Panc1 (cell line): ENCODE measurements at regions of chr9 and their contacts with region 1.

Region 1: DNA sequence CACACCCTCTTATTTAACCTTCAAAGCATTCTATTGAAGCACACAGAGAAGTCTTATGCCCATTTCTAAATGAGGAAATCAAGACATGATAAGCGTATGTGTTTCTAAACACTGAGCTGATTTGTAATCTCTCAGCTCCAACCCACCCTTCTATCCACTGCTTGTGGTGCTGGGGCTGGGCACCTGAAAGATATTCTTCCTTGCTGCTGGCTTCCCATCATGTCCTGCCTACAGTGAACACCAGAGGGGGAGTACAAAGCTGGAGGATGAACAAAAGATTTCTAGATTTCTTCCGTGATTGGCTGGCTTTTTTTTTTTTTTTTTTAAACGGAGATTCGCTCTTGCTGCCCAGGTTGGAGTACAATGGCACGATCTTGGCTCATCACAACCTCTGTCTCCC is 14.4 kb downstream of the ACTL7A start:
- DNase-seq: no peak
- ATAC-seq: no peak
- H3K4me3 ChIP-seq: no peak overlapping the region
- H3K27ac ChIP-seq: no peak overlapping the region
- H3K4me1 ChIP-seq: no peaks in the 10 kb centered on the region
- H3K27me3 ChIP-seq: no peaks in the 10 kb centered on the region
- CTCF ChIP-seq: no peak

Region 2: GRCh38 chr9:107363516-107364152 is 1512.8 kb before region 1 on chr9:
- CTCF ChIA-PET with region 1: interaction called, 12 read pairs
- POLR2A ChIA-PET with region 1: no interaction called
- in situ Hi-C with region 1: no loop called
- intact Hi-C with region 1: no loop called
- DNase-seq: no peak
- ATAC-seq: no peak
- H3K4me3 ChIP-seq: no peak overlapping the region
- H3K27ac ChIP-seq: no peak overlapping the region
- H3K4me1 ChIP-seq: no peaks in the 10 kb centered on the region
- H3K27me3 ChIP-seq: no peaks in the 10 kb centered on the region
- CTCF ChIP-seq: no peak

Region 3: GRCh38 chr9:108664309-108665255 is 211.8 kb before region 1 on chr9:
- CTCF ChIA-PET with region 1: no interaction called
- POLR2A ChIA-PET with region 1: no interaction called
- in situ Hi-C with region 1: no loop called
- intact Hi-C with region 1: no loop called
- DNase-seq: no peak
- ATAC-seq: no peak
- H3K4me3 ChIP-seq: no peak overlapping the region
- H3K27ac ChIP-seq: no peak overlapping the region
- H3K4me1 ChIP-seq: no peaks in the 10 kb centered on the region
- H3K27me3 ChIP-seq: no peaks in the 10 kb centered on the region
- CTCF ChIP-seq: no peak